ENCODE measurements at regions of chr9 and their contacts with region 1.

Region 1: GRCh38 chr9:123349691-123350480 is 6.1 kb upstream of the CRB2 start:
- DNase-seq: peak; percentile 52 to 88
- ATAC-seq: peak; percentile 60 to 82
- H3K4me3 ChIP-seq: no peak overlapping the region
- H3K27ac ChIP-seq: no peak overlapping the region
- H3K4me1 ChIP-seq: peaks cover 3% of the 10 kb centered on the region; the same call in 2 of the 3 replicates
- CTCF ChIP-seq: peak; percentile 92
- EP300 ChIP-seq: no peak
- POLR2A ChIP-seq: no peak
- RAD21 ChIP-seq: peak; percentile 96 to 99

Region 2: DNA sequence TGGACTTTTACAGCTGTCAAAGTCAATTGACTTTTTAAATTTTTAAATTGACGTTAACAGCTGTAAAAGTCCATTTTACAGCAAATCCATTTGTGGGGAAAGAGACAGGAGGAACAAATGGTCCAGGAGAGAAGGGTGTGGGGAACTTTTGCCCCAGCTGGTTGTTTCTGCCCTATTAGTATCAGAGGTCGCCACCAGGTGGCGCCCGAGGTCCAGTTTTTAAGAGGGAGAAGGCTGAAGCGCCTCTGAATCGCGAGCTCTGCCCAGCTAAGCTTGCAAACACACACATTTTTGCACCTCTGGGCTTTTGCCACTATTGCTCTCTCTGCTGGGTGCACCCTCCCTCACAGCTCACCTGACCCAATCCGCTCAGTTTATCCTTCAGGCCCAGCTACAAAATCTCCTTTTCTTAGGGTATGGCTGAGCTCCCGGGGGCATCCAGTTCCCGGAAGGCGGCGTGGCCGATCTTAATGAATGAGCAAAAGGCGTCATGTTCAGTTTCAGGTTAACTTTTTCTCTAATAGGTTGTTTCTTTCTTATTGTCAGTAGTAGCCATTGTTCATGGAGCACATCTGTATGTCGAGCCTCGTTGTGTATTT is 1250.5 kb before region 1 on chr9:
- CTCF ChIA-PET with region 1: no interaction called
- POLR2A ChIA-PET with region 1: no interaction called
- DNase-seq: peak; percentile 69 to 71
- ATAC-seq: peak; percentile 81 to 92
- H3K4me3 ChIP-seq: no peak overlapping the region
- H3K27ac ChIP-seq: no peak overlapping the region
- H3K4me1 ChIP-seq: no peaks in the 10 kb centered on the region
- CTCF ChIP-seq: peak; percentile 89
- EP300 ChIP-seq: no peak
- POLR2A ChIP-seq: no peak
- RAD21 ChIP-seq: peak; percentile 82 to 84

Region 3: DNA sequence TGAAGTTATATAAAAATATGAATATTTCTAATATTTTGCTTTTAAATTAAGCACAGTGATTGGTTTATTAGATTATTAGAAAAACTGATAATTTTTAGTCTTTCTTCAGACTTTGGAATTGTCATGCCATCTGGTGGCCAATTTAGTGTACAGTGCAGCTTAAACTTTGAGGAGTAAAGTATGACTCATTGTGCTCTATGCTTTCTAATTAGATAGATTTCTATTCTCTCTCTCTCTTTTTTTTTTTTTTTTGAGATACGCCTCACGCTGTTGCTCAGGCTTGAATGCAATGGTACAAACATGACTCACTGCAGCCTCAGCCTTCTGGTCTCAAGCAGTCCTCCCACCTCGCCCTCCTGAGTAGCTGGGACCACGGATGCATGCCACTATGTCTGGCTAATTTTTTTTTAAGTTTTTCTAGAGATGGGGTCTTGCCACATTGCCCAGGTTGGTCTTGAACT is 358.5 kb before region 1 on chr9:
- CTCF ChIA-PET with region 1: interaction called, 10 read pairs
- POLR2A ChIA-PET with region 1: no interaction called
- DNase-seq: peak; percentile 38 to 53
- ATAC-seq: peak; percentile 64 to 77; a peak in 4 of 6 replicates
- H3K4me3 ChIP-seq: no peak overlapping the region
- H3K27ac ChIP-seq: no peak overlapping the region
- H3K4me1 ChIP-seq: no peaks in the 10 kb centered on the region
- CTCF ChIP-seq: peak; percentile 79
- EP300 ChIP-seq: no peak
- POLR2A ChIP-seq: no peak
- RAD21 ChIP-seq: peak; percentile 62 to 69

Region 4: GRCh38 chr9:123091459-123091858 is 258.4 kb before region 1 on chr9:
- CTCF ChIA-PET with region 1: interaction called, 54 read pairs
- POLR2A ChIA-PET with region 1: no interaction called
- DNase-seq: no peak
- ATAC-seq: peak in 1 of 2 experiments; percentile 23; a peak in 1 of 6 replicates
- H3K4me3 ChIP-seq: no peak overlapping the region
- H3K27ac ChIP-seq: no peak overlapping the region
- H3K4me1 ChIP-seq: no peaks in the 10 kb centered on the region
- CTCF ChIP-seq: peak; percentile 34
- EP300 ChIP-seq: no peak
- POLR2A ChIP-seq: no peak
- RAD21 ChIP-seq: no peak

Region 5: GRCh38 chr9:123232016-123232731 is 117.7 kb before region 1 on chr9:
- CTCF ChIA-PET with region 1: interaction called, 10 read pairs
- POLR2A ChIA-PET with region 1: no interaction called
- DNase-seq: no peak
- ATAC-seq: no peak
- H3K4me3 ChIP-seq: no peak overlapping the region
- H3K27ac ChIP-seq: no peak overlapping the region
- H3K4me1 ChIP-seq: 0 out of 3 replicates have a peak, but pooled peaks cover 4% of the 10 kb centered on the region
- CTCF ChIP-seq: no peak
- EP300 ChIP-seq: no peak
- POLR2A ChIP-seq: no peak
- RAD21 ChIP-seq: no peak

Region 6: DNA sequence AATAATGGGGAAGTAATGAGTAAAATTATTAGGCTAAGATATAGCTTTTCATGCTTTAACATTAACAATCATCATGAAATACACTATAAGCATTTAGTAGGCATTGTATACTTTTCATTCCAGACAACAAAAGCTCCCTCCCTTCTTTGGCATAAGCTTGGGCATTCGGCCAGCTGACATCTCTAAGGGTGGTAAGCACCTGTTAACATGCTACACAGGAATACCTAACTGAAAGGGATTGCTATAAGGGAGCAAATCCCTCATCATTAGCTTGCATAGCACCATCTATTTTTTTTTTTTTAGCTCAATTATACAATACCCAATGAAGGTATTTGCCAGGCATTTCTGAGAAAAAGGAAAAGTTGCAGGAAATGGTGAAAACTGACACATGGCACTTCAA is 98.1 kb before region 1 on chr9:
- CTCF ChIA-PET with region 1: no interaction called
- POLR2A ChIA-PET with region 1: no interaction called
- DNase-seq: no peak
- ATAC-seq: no peak
- H3K4me3 ChIP-seq: no peak overlapping the region
- H3K27ac ChIP-seq: no peak overlapping the region
- H3K4me1 ChIP-seq: no peaks in the 10 kb centered on the region
- CTCF ChIP-seq: no peak
- EP300 ChIP-seq: no peak
- POLR2A ChIP-seq: no peak
- RAD21 ChIP-seq: no peak

Region 7: DNA sequence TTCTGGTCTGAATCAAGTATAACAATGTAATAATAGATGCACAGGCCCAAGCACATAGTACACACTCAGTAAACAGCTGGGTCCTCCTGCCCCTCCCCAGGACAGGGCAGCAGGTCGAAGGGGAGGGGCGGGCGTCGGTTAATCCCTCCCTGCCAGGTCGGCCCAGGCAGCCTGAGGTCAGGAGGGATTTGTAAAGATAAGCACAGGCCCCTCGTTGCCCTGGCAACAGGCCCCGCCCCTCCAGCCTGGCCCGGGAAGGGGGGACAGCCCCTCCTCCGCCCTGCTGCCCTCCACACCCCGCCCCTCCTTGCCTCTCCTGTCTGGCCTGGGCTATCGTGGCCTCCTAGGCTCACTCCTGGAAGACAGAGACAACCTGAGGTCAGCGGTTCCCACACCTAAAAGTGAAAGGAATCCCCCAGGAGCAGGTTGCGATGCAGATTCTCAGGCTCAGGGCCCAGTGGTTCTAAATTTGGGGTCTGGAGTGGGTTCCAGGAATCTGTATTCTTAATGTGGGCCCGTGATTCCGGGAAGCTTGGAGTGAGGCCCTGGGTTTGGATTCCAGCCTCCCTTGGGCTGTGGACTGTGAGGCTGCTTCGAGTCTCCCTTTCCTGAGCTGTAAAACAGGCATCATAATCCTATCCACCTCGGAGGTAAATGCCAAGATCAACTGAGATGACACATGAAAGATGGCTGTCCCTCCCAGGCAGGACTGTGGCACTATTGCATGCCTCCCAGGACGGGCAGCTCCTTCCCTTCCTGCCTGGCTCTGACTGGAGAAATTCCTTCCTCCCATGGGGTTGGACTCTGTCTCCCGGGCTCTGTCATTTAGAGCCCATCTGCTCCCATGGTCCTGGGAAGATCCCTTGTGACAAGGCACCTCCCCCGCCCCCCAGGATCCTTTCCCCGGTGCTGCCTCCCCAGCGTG is 10.5 kb after region 1 on chr9:
- CTCF ChIA-PET with region 1: interaction called, 84 read pairs
- POLR2A ChIA-PET with region 1: no interaction called
- DNase-seq: peak in 1 of 2 experiments; percentile 56
- ATAC-seq: peak in 1 of 2 experiments; percentile 24; a peak in 3 of 6 replicates
- H3K4me3 ChIP-seq: no peak overlapping the region
- H3K27ac ChIP-seq: peak overlapping the region in 1 of 2 experiments; percentile 31; a peak in 1 of 6 replicates
- H3K4me1 ChIP-seq: peaks cover 9% of the 10 kb centered on the region; the same call in 2 of the 3 replicates
- CTCF ChIP-seq: no peak
- EP300 ChIP-seq: no peak
- POLR2A ChIP-seq: no peak
- RAD21 ChIP-seq: no peak

Region 8: DNA sequence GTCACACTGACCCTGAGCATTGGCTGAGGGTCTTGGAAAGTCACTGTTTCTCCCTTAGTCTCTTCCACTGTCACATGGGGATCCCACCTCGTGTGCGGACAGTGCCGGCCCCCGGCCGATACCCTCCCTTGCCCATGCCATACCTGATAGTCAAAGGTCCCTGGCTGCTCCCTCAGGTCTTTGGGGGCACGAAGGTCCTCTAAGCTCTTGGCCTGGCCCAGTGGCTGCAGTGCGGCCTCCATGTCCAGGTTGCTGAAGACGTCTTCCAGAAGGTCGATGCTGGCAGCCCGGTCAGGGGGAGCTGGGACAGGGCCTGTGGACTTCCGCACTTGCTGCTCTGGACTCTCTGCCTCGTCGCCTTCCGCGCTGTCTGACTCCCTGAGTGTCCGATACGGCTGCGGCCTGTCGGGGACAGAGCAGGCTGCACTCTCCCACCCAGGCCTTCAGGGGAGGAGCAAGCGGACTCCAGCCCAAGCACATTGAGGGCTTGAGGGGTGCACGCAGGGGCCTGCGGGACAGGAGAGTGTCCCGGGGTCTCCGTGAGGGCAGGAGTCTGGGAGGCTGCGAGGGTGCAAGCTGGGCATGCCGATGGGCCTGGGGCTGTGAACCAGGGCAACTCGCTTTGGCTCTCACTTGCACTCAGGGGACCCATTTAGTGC is 33.8 kb after region 1 on chr9:
- CTCF ChIA-PET with region 1: interaction called, 130 read pairs
- POLR2A ChIA-PET with region 1: no interaction called
- DNase-seq: no peak
- ATAC-seq: no peak
- H3K4me3 ChIP-seq: no peak overlapping the region
- H3K27ac ChIP-seq: no peak overlapping the region
- H3K4me1 ChIP-seq: no peaks in the 10 kb centered on the region
- CTCF ChIP-seq: no peak
- EP300 ChIP-seq: no peak
- POLR2A ChIP-seq: no peak
- RAD21 ChIP-seq: no peak